ENCODE measurements at regions of chr5 and their contacts with region 1.

Region 1: GRCh38 chr5:16934123-16934522 is 2.0 kb downstream of the MYO10 start:
- DNase-seq: no peak
- H3K4me3 ChIP-seq: peak overlapping the region; percentile 97
- H3K27me3 ChIP-seq: no peaks in the 10 kb centered on the region
- CTCF ChIP-seq: peak; percentile 97

Region 2: GRCh38 chr5:16809395-16810207 is 124.5 kb before region 1 on chr5:
- CTCF ChIA-PET with region 1: interaction called, 12 read pairs
- POLR2A ChIA-PET with region 1: interaction called, 10 read pairs
- DNase-seq: peak; percentile 74
- H3K4me3 ChIP-seq: no peak overlapping the region
- H3K27me3 ChIP-seq: no peaks in the 10 kb centered on the region
- CTCF ChIP-seq: no peak

Region 3: DNA sequence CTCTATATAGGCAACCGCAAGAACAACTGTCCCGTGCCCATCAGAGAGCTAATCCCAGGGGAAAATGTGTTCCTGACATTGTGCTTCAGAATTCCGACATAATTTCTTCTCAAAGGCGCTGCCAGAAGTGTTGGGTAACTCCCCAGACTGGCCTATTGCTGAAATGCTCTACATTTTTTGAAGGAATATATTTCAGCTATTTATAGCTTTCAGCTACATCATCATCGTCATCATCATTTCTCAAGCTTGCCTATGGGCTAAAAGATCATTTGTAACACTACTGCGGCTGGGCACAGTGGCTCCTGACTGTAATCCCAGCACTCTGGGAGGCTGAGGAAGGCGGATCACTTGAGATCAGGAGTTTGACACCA is 47.8 kb before region 1 on chr5:
- CTCF ChIA-PET with region 1: interaction called, 3 read pairs
- POLR2A ChIA-PET with region 1: interaction called, 10 read pairs
- DNase-seq: no peak
- H3K4me3 ChIP-seq: no peak overlapping the region
- H3K27me3 ChIP-seq: no peaks in the 10 kb centered on the region
- CTCF ChIP-seq: no peak

Region 4: GRCh38 chr5:17089690-17090089 is 155.6 kb after region 1 on chr5:
- CTCF ChIA-PET with region 1: no interaction called
- POLR2A ChIA-PET with region 1: interaction called, 11 read pairs
- DNase-seq: peak; percentile 35
- H3K4me3 ChIP-seq: no peak overlapping the region
- H3K27me3 ChIP-seq: no peaks in the 10 kb centered on the region
- CTCF ChIP-seq: no peak

Region 5: GRCh38 chr5:17132444-17133083 is 198.4 kb after region 1 on chr5:
- CTCF ChIA-PET with region 1: interaction called, 41 read pairs
- POLR2A ChIA-PET with region 1: interaction called, 4 read pairs
- DNase-seq: no peak
- H3K4me3 ChIP-seq: no peak overlapping the region
- H3K27me3 ChIP-seq: no peaks in the 10 kb centered on the region
- CTCF ChIP-seq: peak; percentile 58

Region 6: GRCh38 chr5:17143335-17143734 is 209.2 kb after region 1 on chr5:
- CTCF ChIA-PET with region 1: interaction called, 3 read pairs
- POLR2A ChIA-PET with region 1: interaction called, 12 read pairs
- DNase-seq: no peak
- H3K4me3 ChIP-seq: no peak overlapping the region
- H3K27me3 ChIP-seq: no peaks in the 10 kb centered on the region
- CTCF ChIP-seq: no peak